ENCODE measurements at regions of chr12 and their contacts with region 1.

Region 1: DNA sequence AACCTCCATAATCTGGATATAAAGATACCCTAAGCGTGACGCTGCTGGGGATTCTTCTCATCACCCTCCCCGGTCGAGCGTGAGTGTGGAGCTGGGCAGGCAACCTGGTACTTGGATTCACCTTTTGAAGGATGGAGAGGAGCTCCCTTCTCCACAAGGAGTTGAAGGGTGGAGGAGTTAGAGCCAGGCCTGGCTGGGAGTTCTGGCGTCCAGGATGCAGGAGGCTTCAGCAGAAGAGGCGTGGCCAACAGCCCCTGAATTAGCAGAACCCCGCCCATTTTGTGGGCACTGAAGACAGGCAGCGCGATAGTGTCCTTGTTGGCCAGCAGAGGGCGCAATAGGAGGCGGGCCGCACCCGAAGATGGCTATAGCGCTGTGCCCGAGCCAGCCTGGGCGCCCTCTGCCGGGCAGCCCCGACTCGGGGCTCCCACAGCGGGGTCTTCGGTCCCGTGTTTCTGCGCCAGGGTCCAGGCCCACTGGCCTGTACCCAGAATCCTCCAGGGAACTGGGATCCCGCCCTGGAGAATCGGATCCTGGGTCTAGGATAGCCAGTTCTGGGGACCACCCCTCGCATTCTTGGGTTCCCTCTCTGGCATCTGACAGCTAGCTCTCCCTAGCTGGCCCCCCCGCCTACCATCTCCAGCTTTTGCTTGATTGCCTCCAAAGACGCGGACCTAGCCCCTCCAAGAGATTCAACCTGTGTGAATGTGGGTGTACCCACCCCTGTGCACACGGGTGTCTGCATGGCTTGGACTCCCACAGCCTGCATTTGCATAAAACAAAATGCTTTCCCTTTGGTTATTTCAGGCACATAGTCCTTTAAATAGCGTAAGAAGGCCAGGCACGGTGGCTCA is 26.0 kb upstream of the SMUG1 start:
- DNase-seq: peak; percentile 94 to 96 (median 94)
- H3K4me3 ChIP-seq: peak overlapping the region in 6 of 7 experiments; percentile 21 to 75 (median 42)
- H3K27ac ChIP-seq: no peak overlapping the region
- H3K4me1 ChIP-seq: peaks cover 8 to 34% (median 30%) of the 10 kb centered on the region in 4 experiments
- H3K27me3 ChIP-seq: peaks cover 0 to 38% (median 23%) of the 10 kb centered on the region in 5 experiments

Region 2: DNA sequence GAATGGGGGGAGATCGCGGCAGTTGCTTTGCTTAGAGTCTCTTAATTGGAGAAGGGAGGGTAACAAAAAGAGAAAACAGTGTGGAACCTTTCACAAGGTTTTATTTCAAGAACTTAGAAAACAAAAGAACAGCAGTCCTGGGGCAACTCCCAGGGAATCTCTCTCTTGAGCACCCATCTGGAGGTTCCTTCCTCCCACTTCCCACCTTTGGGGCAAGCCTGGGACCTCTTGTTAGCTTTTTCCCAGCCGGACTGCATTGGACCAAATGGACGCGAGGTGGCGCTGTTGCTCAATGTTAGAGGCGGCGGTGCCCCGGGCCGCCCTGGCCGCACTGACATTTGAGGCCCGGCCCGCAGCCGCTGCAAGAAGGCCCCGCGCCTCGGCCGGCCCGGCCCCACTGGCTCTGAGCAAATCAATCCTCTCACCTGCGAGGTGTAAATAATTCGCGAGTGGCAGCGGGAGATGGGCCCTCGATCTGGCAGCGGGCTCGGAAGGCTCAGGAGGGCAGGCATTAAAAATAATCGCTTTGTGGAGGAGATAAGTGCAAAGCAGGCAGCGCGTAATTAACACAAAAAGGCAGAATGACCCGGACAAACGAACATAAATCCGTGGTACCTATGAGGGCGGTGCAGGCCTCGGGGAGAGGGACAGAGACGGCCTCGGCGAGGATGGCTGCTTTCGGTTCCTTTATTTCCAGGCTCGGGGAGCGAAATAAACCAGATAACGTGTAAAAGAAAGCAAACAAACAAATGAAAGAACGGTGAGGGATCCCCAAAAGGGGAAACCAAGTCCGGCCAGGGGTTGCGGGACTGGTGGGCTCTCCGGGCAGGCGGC is 208.7 kb before region 1 on chr12:
- CTCF ChIA-PET with region 1: interaction called, 101 read pairs
- POLR2A ChIA-PET with region 1: no interaction called
- DNase-seq: peak; percentile 73 to 80 (median 79)
- H3K4me3 ChIP-seq: peak overlapping the region in 4 of 7 experiments; percentile 32 to 72 (median 60)
- H3K27ac ChIP-seq: no peak overlapping the region
- H3K4me1 ChIP-seq: peaks cover 0 to 13% (median 8%) of the 10 kb centered on the region in 4 experiments
- H3K27me3 ChIP-seq: peaks cover 16 to 98% (median 67%) of the 10 kb centered on the region in 5 experiments

Region 3: DNA sequence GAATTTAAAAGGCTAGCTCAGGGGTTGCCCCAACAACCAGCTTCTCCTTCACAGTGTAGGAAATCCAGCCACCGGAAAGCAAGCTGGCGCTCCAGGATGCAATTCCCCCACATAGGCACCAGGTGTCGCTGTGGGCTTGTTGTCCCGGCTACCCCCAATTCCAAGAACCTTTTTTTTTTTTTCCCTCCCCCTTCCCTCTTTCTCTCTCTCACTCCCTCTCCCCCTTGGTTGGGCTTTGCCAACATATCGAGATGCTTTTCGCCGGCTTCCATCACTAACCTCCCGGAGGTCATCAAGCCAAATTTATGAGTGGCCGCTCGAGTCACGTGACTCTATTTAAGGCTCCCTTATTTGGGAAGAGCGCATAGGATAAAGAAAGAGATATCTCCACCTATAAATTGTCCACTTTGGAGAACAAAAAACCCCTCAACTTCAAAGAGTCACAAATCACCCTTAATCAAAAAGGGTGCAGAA is 182.1 kb before region 1 on chr12 and contains the start of gene HOXC5:
- CTCF ChIA-PET with region 1: interaction called, 15 read pairs
- POLR2A ChIA-PET with region 1: no interaction called
- DNase-seq: peak; percentile 68 to 84 (median 80)
- H3K4me3 ChIP-seq: peak within 1 kb of the TSS in 2 of 7 experiments; percentile 8 to 17
- H3K27ac ChIP-seq: no peak within 1 kb of the TSS
- H3K4me1 ChIP-seq: peaks cover 0 to 27% (median 12%) of the 10 kb centered on the region in 4 experiments
- H3K27me3 ChIP-seq: peaks cover 15 to 100% (median 71%) of the 10 kb centered on the region in 5 experiments

Region 4: DNA sequence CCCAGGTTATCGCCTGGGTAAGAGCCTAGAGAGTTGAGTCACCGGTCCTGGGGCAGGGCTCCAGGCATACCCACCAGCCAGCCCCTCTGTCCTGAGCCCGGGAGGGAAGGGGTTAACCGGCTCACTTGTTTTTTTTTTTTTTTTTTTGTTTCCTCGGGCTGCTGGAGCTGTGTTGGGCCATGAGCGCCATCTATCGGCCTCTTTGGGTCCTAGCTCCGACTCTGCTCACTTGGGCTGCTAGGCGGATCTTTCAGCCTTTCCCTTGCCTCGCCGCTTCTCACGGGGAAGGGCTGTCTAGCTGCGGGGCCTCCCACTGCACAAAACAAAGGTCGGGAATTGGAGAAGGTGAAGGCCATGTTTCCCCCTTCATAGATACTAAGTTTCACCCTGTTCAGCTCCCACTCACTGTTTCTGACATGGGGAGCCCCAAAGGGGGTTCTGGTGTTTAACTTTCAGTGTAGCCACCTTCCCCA is 23.2 kb before region 1 on chr12:
- CTCF ChIA-PET with region 1: interaction called, 123 read pairs
- POLR2A ChIA-PET with region 1: no interaction called
- DNase-seq: peak; percentile 86 to 93 (median 86)
- H3K4me3 ChIP-seq: no peak overlapping the region
- H3K27ac ChIP-seq: no peak overlapping the region
- H3K4me1 ChIP-seq: peaks cover 4 to 17% (median 13%) of the 10 kb centered on the region in 4 experiments
- H3K27me3 ChIP-seq: peaks cover 14 to 67% (median 35%) of the 10 kb centered on the region in 5 experiments

Region 5: GRCh38 chr12:54201001-54201794 is 13.6 kb before region 1 on chr12:
- CTCF ChIA-PET with region 1: interaction called, 123 read pairs
- POLR2A ChIA-PET with region 1: no interaction called
- DNase-seq: peak; percentile 70 to 77 (median 75)
- H3K4me3 ChIP-seq: no peak overlapping the region
- H3K27ac ChIP-seq: no peak overlapping the region
- H3K4me1 ChIP-seq: peaks cover 3 to 8% (median 6%) of the 10 kb centered on the region in 4 experiments
- H3K27me3 ChIP-seq: peaks cover 4 to 78% (median 37%) of the 10 kb centered on the region in 5 experiments

Region 6: GRCh38 chr12:54229624-54230212 is 14.9 kb after region 1 on chr12:
- CTCF ChIA-PET with region 1: interaction called, 19 read pairs
- POLR2A ChIA-PET with region 1: no interaction called
- DNase-seq: no peak
- H3K4me3 ChIP-seq: no peak overlapping the region
- H3K27ac ChIP-seq: no peak overlapping the region
- H3K4me1 ChIP-seq: peaks cover 6 to 29% (median 18%) of the 10 kb centered on the region in 4 experiments
- H3K27me3 ChIP-seq: peaks cover 0 to 2% (median 0%) of the 10 kb centered on the region in 5 experiments

Region 7: GRCh38 chr12:54265364-54265812 is 50.6 kb after region 1 on chr12:
- CTCF ChIA-PET with region 1: no interaction called
- POLR2A ChIA-PET with region 1: no interaction called
- DNase-seq: no peak
- H3K4me3 ChIP-seq: no peak overlapping the region
- H3K27ac ChIP-seq: no peak overlapping the region
- H3K4me1 ChIP-seq: peaks cover 9 to 26% (median 18%) of the 10 kb centered on the region in 4 experiments
- H3K27me3 ChIP-seq: no peaks in the 10 kb centered on the region